Activated CD4-positive, alpha-beta memory T cell treated with anti-CD3 and anti-CD28 coated beads for 36 hours (primary cell): ENCODE measurements at regions of chr1 and their contacts with region 1.

Region 1: GRCh38 chr1:169694304-169695075 is 16.9 kb downstream of the SELL start:
- DNase-seq: peak; percentile 46
- H3K4me3 Mint-ChIP-seq: peak overlapping the region; percentile 9
- H3K27ac Mint-ChIP-seq: peak overlapping the region; percentile 88
- H3K4me1 Mint-ChIP-seq: peaks cover 96% of the 10 kb centered on the region
- H3K27me3 Mint-ChIP-seq: no peaks in the 10 kb centered on the region

Region 2: DNA sequence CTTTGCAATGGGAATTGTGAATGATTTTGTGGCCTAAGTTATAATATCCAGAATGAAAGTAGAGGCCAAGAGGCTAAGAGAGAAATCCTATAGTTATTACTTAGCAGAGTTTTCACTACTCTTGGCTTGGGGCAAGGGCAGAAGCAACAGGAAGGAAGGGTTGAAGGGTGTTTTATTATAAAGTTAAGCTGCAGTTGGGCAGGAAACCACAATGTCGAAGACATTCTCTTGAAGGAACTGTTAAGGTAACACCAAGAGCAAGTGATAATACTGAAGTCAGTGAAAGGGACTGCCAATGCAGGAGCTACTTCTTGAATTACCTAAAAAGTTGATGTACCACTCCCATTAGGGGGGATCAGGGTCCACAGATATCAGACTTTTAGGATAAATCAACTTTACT is 1159.0 kb before region 1 on chr1:
- CTCF ChIA-PET with region 1: no interaction called
- POLR2A ChIA-PET with region 1: no interaction called
- intact Hi-C with region 1: loop called (anchors 10 kb)
- DNase-seq: no peak
- H3K4me3 Mint-ChIP-seq: no peak overlapping the region
- H3K27ac Mint-ChIP-seq: peak overlapping the region; percentile 25
- H3K4me1 Mint-ChIP-seq: peaks cover 64% of the 10 kb centered on the region
- H3K27me3 Mint-ChIP-seq: no peaks in the 10 kb centered on the region

Region 3: GRCh38 chr1:169485544-169486278 is 208.8 kb before region 1 on chr1 and contains the start of gene SLC19A2:
- CTCF ChIA-PET with region 1: no interaction called
- POLR2A ChIA-PET with region 1: no interaction called
- intact Hi-C with region 1: loop called (anchors 2 kb)
- DNase-seq: peak; percentile 96
- H3K4me3 Mint-ChIP-seq: peak within 1 kb of the TSS; percentile 79
- H3K27ac Mint-ChIP-seq: peak within 1 kb of the TSS; percentile 83
- H3K4me1 Mint-ChIP-seq: peaks cover 53% of the 10 kb centered on the region
- H3K27me3 Mint-ChIP-seq: no peaks in the 10 kb centered on the region
- total RNA-seq, gene SLC19A2: 8.6 to 9.4 TPM

Region 4: GRCh38 chr1:169601093-169601881 is 93.2 kb before region 1 on chr1:
- CTCF ChIA-PET with region 1: interaction called, 75 read pairs
- POLR2A ChIA-PET with region 1: interaction called, 9 read pairs
- intact Hi-C with region 1: loop called (anchors 1 kb)
- DNase-seq: no peak
- H3K4me3 Mint-ChIP-seq: peak overlapping the region; percentile 7
- H3K27ac Mint-ChIP-seq: peak overlapping the region; percentile 48
- H3K4me1 Mint-ChIP-seq: peaks cover 51% of the 10 kb centered on the region
- H3K27me3 Mint-ChIP-seq: no peaks in the 10 kb centered on the region

Region 5: GRCh38 chr1:169680377-169681019 is 14.0 kb before region 1 on chr1:
- CTCF ChIA-PET with region 1: interaction called, 41 read pairs
- POLR2A ChIA-PET with region 1: interaction called, 35 read pairs
- intact Hi-C with region 1: loop called (anchors 1 kb)
- DNase-seq: peak; percentile 80
- H3K4me3 Mint-ChIP-seq: peak overlapping the region; percentile 46
- H3K27ac Mint-ChIP-seq: peak overlapping the region; percentile 90
- H3K4me1 Mint-ChIP-seq: peaks cover 62% of the 10 kb centered on the region
- H3K27me3 Mint-ChIP-seq: no peaks in the 10 kb centered on the region

Region 6: DNA sequence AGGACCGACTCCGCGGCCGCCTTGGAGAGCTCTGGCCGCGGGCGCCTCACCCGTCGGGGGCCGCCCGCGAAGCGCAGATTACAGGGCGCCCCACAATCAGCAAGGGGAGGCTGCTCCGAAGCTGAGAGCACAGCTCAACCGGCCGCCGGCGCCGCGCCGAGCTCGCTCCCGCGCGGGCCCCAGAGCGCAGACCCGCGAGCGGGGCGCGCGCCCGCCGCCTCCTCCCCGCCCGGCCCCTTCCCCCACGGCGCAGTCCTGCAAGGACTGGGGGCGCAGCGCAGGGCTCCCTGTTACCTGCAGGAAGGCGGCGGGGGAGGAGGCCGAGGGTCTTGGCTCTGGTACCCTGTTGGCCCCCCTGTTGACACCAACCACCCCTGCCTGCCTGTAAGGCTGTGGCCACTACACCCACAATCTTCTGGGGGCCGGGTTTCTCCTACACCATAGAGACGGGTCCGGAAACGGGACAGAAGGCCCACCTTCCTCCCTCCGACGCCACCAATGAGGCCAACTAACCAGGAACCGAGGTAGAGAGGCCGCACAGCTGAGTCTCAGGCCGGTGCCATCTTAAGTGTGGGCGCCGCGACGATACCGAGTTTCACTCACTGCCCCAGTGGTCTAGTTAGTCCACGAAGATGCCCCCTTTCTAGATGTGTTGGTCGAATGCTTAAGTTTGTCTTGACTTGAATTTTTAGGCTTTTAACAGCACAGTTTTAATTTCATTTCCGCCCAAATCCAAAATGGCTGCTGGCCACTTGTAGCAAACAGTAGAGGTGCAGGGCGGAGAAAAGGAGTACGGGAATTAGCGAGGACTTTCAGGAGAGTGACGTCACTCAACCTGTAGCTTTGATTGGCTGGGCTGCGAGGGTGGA is 199.2 kb after region 1 on chr1 and contains the start of gene SCYL3:
- CTCF ChIA-PET with region 1: interaction called, 3 read pairs
- POLR2A ChIA-PET with region 1: no interaction called
- intact Hi-C with region 1: loop called (anchors 5 kb)
- DNase-seq: peak; percentile 92
- H3K4me3 Mint-ChIP-seq: peak within 1 kb of the TSS; percentile 82
- H3K27ac Mint-ChIP-seq: peak within 1 kb of the TSS; percentile 98
- H3K4me1 Mint-ChIP-seq: peaks cover 38% of the 10 kb centered on the region
- H3K27me3 Mint-ChIP-seq: no peaks in the 10 kb centered on the region
- total RNA-seq, gene SCYL3: 11.1 to 12.4 TPM

Region 7: DNA sequence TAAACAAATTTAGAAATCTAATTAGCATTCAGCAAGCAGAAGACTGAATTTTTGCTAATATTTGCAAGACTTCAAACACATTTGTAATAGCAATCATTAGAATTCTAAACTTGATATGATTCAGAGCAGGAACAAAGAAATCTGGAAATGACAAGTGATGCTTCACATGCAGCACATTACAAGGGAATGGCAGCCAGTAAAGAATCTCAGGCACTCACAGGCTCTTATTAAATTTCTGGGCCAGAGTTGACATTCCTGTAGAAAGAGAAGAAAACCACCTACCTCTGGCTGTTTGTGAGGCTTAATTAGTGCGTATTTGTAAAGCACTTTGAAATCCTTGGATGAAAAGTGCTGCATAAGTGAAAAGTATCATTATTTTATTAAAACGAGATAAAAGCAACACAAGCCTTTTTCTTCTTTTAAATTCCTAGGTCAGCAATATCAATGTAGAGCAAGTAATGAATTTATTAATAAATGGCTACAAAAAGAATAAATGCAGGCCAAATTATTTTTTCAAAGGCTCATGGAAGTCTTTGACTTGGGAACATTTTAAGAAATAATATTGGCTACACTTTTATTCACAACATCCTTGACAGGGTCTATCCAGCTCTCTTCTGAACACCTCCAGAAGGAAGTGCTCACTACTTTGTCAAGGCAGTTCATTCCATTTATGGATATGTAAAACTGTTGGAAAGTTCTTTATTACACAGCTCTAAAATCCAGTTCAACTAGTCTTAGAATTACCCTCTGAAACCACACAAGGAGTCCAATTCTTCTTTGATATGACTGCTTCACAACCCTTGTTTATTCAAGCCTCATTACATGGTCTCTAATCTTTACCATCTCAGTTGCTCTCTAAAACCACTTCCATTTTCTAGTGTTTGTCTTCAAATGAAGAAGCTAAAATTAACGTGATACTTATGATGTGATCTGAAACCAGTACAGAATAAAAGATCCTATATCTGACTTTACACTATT is 231.3 kb after region 1 on chr1:
- CTCF ChIA-PET with region 1: no interaction called
- POLR2A ChIA-PET with region 1: no interaction called
- intact Hi-C with region 1: no loop called
- DNase-seq: no peak
- H3K4me3 Mint-ChIP-seq: no peak overlapping the region
- H3K27ac Mint-ChIP-seq: no peak overlapping the region
- H3K4me1 Mint-ChIP-seq: peaks cover 7% of the 10 kb centered on the region
- H3K27me3 Mint-ChIP-seq: no peaks in the 10 kb centered on the region